ENCODE measurements at regions of chrX and their contacts with region 1.

Region 1: DNA sequence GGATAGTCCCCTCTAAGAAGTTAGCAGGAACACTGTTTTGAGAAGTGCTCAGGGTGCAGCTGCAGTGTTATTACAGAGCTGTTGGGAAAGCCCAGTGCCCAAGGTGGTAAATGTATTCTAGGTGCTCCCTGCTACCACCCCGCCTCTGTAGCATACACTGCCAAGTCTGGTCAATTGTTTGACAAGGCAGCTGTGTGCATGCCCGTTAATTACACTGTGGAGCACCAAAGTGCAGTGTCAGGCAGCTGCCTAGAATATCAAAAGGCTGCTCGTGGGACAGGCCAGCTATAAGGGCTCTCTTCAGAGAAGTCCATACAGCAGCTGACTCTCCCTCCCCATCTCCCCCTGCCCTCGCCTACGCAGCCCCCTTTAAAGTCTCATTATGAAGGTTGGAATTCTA is 99.9 kb upstream of the KLHL13 start:
- DNase-seq: no peak
- H3K4me3 ChIP-seq: peak overlapping the region in 1 of 3 experiments; percentile 26
- H3K27ac ChIP-seq: peak overlapping the region; percentile 98
- H3K4me1 ChIP-seq: peaks cover 26% of the 10 kb centered on the region
- H3K27me3 ChIP-seq: no peaks in the 10 kb centered on the region
- CTCF ChIP-seq: no peak
- POLR2A ChIP-seq: no peak

Region 2: DNA sequence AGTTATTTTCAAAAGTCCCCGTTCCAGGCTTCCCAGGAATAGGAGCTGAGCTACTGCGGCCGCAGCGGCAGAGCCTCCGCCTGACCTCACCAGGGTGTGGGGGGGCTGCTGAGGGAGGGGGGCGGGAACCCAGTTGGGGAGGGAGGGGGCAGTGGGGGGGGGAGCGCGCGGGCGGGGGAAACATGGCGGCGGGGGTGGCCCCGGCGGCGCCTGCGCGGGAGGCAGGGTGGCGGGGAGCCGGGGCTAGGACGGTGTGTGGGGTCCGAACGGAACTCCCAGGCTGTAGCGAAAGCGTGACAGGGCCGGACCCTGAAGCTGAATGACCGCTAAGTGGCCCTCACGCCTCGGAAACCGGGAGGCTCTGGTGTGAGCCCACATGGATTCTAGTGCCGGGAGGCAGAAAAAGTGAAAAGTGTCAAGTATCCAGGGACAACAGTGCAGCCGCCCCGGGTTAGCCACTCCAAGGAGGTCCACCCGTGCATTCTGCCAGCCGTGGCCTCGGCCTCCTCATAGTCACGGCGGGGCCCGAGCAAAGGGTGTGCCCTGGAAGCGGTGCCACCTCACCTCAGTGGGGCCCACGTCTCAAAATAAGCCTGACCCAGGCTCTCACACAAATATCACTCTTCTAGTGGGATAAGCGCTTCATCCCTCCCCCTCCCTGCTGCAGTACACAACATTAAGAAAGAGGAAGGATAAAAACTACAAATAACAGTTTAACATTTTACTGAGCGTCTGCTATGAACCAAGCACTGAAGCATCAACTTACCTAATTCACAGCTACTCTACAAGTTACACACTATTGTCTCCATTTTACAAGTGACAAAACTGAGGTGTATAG is 99.6 kb before region 1 on chrX and contains the start of gene KLHL13:
- CTCF ChIA-PET with region 1: no interaction called
- POLR2A ChIA-PET with region 1: no interaction called
- dilution Hi-C with region 1: no loop called
- intact Hi-C with region 1: loop called (anchors 1 kb)
- DNase-seq: peak; percentile 51
- H3K4me3 ChIP-seq: peak within 1 kb of the TSS; percentile 49 to 86 (median 76)
- H3K27ac ChIP-seq: peak within 1 kb of the TSS; percentile 68
- H3K4me1 ChIP-seq: peaks cover 6% of the 10 kb centered on the region
- H3K27me3 ChIP-seq: no peaks in the 10 kb centered on the region
- CTCF ChIP-seq: no peak
- POLR2A ChIP-seq: no peak
- total RNA-seq, gene KLHL13: 15.3 and 19.0 TPM in 2 replicates

Region 3: DNA sequence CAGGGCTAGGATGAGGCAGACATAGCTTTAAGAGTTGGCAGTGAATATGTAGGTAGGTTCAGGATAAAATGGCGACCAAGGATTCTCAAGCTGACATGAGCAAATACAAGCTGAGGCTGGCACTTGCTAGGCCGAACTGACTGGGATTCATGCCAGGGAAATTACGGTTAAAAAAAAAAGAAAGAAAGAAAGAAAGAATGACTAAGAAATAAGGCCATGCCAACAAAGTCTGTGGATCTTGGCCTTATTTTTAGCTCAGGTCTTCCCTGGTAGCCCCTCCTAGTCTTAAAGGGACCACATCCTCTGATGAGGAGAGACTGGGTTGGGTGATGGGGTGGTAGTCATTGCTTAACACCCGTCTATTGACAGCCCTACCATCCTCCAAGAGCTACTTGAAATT is 35.5 kb before region 1 on chrX:
- CTCF ChIA-PET with region 1: no interaction called
- POLR2A ChIA-PET with region 1: no interaction called
- dilution Hi-C with region 1: no loop called
- intact Hi-C with region 1: loop called (anchors 5 kb)
- DNase-seq: peak; percentile 79
- H3K4me3 ChIP-seq: no peak overlapping the region
- H3K27ac ChIP-seq: no peak overlapping the region
- H3K4me1 ChIP-seq: peaks cover 8% of the 10 kb centered on the region
- H3K27me3 ChIP-seq: no peaks in the 10 kb centered on the region
- CTCF ChIP-seq: no peak
- POLR2A ChIP-seq: no peak

Region 4: GRCh38 chrX:118199975-118200374 is 16.5 kb before region 1 on chrX:
- CTCF ChIA-PET with region 1: no interaction called
- POLR2A ChIA-PET with region 1: no interaction called
- dilution Hi-C with region 1: no loop called
- intact Hi-C with region 1: no loop called
- DNase-seq: no peak
- H3K4me3 ChIP-seq: no peak overlapping the region
- H3K27ac ChIP-seq: no peak overlapping the region
- H3K4me1 ChIP-seq: no peaks in the 10 kb centered on the region
- H3K27me3 ChIP-seq: no peaks in the 10 kb centered on the region
- CTCF ChIP-seq: no peak
- POLR2A ChIP-seq: no peak

Region 5: DNA sequence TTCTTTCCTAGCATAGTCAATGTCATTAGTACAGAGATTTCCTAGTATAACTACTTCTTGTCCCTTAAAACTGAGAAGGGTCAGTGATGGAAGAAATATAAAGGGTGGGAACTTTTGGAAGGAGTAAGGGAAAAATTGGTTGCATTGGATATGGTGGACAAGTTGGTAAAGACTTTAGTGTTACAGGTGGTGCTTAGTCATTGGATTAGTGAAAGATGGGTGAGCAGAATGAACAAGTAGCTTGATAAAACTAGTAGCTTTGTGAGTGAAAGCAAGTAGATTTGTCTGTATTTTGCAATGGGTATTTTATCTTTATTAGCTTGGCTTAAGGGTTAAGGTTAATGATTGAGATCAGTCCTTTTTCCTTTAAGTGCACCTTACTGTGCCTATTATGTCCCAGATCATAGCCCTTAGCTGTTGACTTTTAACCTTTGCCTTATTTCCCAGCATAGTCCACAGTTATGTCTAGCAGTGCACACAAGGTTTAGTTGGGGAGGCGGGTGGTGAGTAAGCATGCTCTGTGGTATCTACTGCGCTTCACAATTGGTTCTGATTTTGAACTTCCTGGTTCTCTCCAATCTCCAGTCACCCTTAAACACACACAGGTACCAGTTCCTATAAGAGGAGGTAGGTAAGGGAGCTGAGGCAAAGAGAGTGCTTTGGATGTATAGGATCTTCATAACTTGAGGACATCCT is 138.9 kb after region 1 on chrX:
- CTCF ChIA-PET with region 1: no interaction called
- POLR2A ChIA-PET with region 1: no interaction called
- dilution Hi-C with region 1: no loop called
- intact Hi-C with region 1: loop called (anchors 5 kb)
- DNase-seq: peak; percentile 49
- H3K4me3 ChIP-seq: peak overlapping the region in 1 of 3 experiments; percentile 23
- H3K27ac ChIP-seq: peak overlapping the region; percentile 76
- H3K4me1 ChIP-seq: peaks cover 45% of the 10 kb centered on the region
- H3K27me3 ChIP-seq: no peaks in the 10 kb centered on the region
- CTCF ChIP-seq: no peak
- POLR2A ChIP-seq: no peak

Measured in endothelial cell of umbilical vein (primary cell).